PC-3 (cell line): ENCODE measurements at regions of chr3 and their contacts with region 1.

Region 1: DNA sequence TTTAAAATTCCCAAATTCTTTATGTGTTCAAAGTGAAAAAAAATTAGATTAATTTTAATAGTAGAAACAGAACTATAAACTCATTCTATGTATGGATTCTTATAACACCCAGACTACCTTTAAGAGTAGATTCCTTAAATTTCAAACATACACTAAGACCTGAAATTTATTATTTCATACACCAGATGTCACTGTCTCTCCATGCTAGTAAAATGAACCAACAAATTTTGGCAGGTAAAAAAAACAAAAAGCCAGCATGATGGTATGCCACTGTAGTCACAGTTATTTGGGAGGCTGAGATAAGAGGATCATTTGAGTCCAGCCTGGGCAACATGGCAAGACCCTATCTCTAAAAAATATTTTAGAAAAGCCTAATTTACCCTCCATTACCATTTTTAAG is 461.3 kb upstream of the NAALADL2 start:
- DNase-seq: peak; percentile 73
- ATAC-seq: no peak
- H3K4me3 ChIP-seq: no peak overlapping the region
- H3K27ac ChIP-seq: no peak overlapping the region
- H3K4me1 ChIP-seq: no peaks in the 10 kb centered on the region
- H3K27me3 ChIP-seq: no peaks in the 10 kb centered on the region
- CTCF ChIP-seq: peak; percentile 69

Region 2: GRCh38 chr3:174376346-174376745 is 21.5 kb before region 1 on chr3:
- CTCF ChIA-PET with region 1: no interaction called
- POLR2A ChIA-PET with region 1: no interaction called
- intact Hi-C with region 1: no loop called
- DNase-seq: peak; percentile 19
- ATAC-seq: peak; percentile 76
- H3K4me3 ChIP-seq: no peak overlapping the region
- H3K27ac ChIP-seq: no peak overlapping the region
- H3K4me1 ChIP-seq: 0 out of 2 replicates have a peak, but pooled peaks cover 4% of the 10 kb centered on the region
- H3K27me3 ChIP-seq: no peaks in the 10 kb centered on the region
- CTCF ChIP-seq: no peak

Region 3: GRCh38 chr3:174408310-174408709 is 10.5 kb after region 1 on chr3:
- CTCF ChIA-PET with region 1: interaction called, 3 read pairs
- POLR2A ChIA-PET with region 1: interaction called, 14 read pairs
- intact Hi-C with region 1: no loop called
- DNase-seq: peak; percentile 77
- ATAC-seq: peak; percentile 87
- H3K4me3 ChIP-seq: no peak overlapping the region
- H3K27ac ChIP-seq: no peak overlapping the region
- H3K4me1 ChIP-seq: peaks cover 25% of the 10 kb centered on the region
- H3K27me3 ChIP-seq: no peaks in the 10 kb centered on the region
- CTCF ChIP-seq: no peak

Region 4: DNA sequence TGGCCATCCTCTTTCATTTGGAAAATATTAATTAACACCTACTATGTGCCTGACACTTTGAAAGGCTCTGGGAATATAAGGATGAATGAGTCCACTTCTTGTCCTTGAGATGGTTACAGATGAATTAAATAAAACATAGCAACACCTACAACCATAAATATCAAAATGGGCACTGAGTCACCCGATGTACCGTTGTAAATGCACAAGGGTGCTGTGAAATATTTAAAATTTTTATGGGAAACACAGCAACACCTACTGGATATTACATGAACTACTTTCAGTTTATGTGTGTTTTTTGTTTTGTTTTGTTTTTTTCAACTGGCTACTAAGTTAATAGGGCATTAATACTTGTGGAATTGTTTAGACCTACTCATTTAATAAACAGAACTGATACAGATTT is 222.3 kb after region 1 on chr3:
- CTCF ChIA-PET with region 1: no interaction called
- POLR2A ChIA-PET with region 1: no interaction called
- intact Hi-C with region 1: loop called (anchors 2 kb)
- DNase-seq: peak; percentile 61
- ATAC-seq: peak; percentile 46
- H3K4me3 ChIP-seq: no peak overlapping the region
- H3K27ac ChIP-seq: no peak overlapping the region
- H3K4me1 ChIP-seq: no peaks in the 10 kb centered on the region
- H3K27me3 ChIP-seq: no peaks in the 10 kb centered on the region
- CTCF ChIP-seq: peak; percentile 69